ENCODE measurements at regions of chr1 and their contacts with region 1.

Region 1: DNA sequence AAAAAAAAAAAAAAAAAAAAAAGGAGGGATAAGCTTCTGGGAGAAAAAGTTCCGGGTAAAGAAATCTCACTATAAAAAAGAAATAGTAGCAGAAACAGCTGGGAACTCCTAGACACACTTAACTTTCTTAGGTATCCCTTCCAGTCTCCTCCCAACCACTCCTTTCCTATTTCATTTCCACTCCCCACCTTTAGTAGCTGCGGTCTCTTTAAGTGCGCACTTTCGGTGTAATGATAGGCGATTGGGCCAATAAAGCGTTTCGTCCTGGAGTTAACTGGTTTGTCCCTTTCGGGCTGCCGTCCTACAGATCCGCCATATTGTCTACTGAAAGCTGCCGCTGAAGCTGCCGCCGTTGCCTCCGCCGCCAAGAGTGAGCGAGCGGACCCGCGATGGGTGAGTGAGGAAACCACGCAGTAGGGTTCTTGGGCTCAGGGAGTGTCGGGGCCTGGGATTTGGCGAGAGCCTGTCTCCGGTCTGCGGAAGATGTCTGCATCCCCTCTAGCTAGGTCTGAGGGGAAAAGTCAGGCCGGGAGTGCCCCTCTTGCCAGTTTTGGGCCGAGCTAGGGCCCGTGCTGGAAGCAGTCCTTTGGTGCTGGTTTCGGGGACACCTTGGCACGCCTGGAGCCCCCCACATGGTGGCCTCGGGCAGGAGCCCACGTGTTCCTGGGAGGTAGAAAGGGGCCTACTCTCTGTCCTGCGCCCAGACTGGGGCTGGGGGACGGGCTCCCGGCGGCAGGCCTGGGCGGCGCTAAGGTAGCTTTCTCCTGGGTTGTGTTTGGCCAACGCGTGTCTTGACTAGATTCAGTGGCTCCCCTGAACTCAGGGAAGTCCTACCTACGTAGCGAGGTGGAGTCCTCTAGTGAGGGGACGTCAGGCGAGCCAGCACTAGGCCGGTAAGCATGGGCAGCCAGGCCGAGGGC is at the start of gene KPNA6:
- DNase-seq: peak; percentile 78
- ATAC-seq: peak; percentile 83
- H3K4me3 Mint-ChIP-seq: peak within 1 kb of the TSS; percentile 99
- H3K27ac Mint-ChIP-seq: peak within 1 kb of the TSS; percentile 98
- H3K4me1 Mint-ChIP-seq: peaks cover 48% of the 10 kb centered on the region
- H3K27me3 Mint-ChIP-seq: no peaks in the 10 kb centered on the region
- CTCF ChIP-seq: no peak
- total RNA-seq, gene KPNA6: 58.7 and 60.3 TPM in 2 replicates

Region 2: GRCh38 chr1:32013386-32014198 is 94.4 kb before region 1 on chr1 and contains the start of gene KHDRBS1:
- CTCF ChIA-PET with region 1: no interaction called
- POLR2A ChIA-PET with region 1: interaction called, 3 read pairs
- intact Hi-C with region 1: loop called (anchors 5 kb)
- DNase-seq: peak; percentile 97
- ATAC-seq: peak; percentile 85
- H3K4me3 Mint-ChIP-seq: peak within 1 kb of the TSS; percentile 98
- H3K27ac Mint-ChIP-seq: peak within 1 kb of the TSS; percentile 91
- H3K4me1 Mint-ChIP-seq: peaks cover 39% of the 10 kb centered on the region
- H3K27me3 Mint-ChIP-seq: no peaks in the 10 kb centered on the region
- CTCF ChIP-seq: no peak
- total RNA-seq, gene KHDRBS1: 146 and 152 TPM in 2 replicates

Region 3: GRCh38 chr1:32142446-32143301 is 34.7 kb after region 1 on chr1:
- CTCF ChIA-PET with region 1: interaction called, 5 read pairs
- POLR2A ChIA-PET with region 1: interaction called, 4 read pairs
- intact Hi-C with region 1: loop called (anchors 5 kb)
- DNase-seq: no peak
- ATAC-seq: no peak
- H3K4me3 Mint-ChIP-seq: no peak overlapping the region
- H3K27ac Mint-ChIP-seq: no peak overlapping the region
- H3K4me1 Mint-ChIP-seq: peaks cover 53% of the 10 kb centered on the region
- H3K27me3 Mint-ChIP-seq: no peaks in the 10 kb centered on the region
- CTCF ChIP-seq: no peak

Region 4: GRCh38 chr1:32200226-32201010 is 92.4 kb after region 1 on chr1 and contains the start of gene CCDC28B:
- CTCF ChIA-PET with region 1: no interaction called
- POLR2A ChIA-PET with region 1: interaction called, 16 read pairs
- intact Hi-C with region 1: loop called (anchors 2 kb)
- DNase-seq: peak; percentile 62
- ATAC-seq: peak; percentile 51
- H3K4me3 Mint-ChIP-seq: peak within 1 kb of the TSS; percentile 87
- H3K27ac Mint-ChIP-seq: peak within 1 kb of the TSS; percentile 87
- H3K4me1 Mint-ChIP-seq: peaks cover 49% of the 10 kb centered on the region
- H3K27me3 Mint-ChIP-seq: no peaks in the 10 kb centered on the region
- CTCF ChIP-seq: no peak
- total RNA-seq, gene CCDC28B: 50.4 and 56.9 TPM in 2 replicates

Region 5: GRCh38 chr1:32221980-32222755 is 114.2 kb after region 1 on chr1 and contains the starts of genes EIF3I and TMEM234:
- CTCF ChIA-PET with region 1: no interaction called
- POLR2A ChIA-PET with region 1: no interaction called
- intact Hi-C with region 1: no loop called
- DNase-seq: peak; percentile 80
- ATAC-seq: peak; percentile 85
- H3K4me3 Mint-ChIP-seq: peak within 1 kb of the TSS; percentile 96
- H3K27ac Mint-ChIP-seq: peak within 1 kb of the TSS; percentile 95
- H3K4me1 Mint-ChIP-seq: peaks cover 50% of the 10 kb centered on the region
- H3K27me3 Mint-ChIP-seq: no peaks in the 10 kb centered on the region
- CTCF ChIP-seq: no peak
- total RNA-seq, gene EIF3I: 196 and 213 TPM in 2 replicates
- total RNA-seq, gene TMEM234: 31.8 and 35.5 TPM in 2 replicates

Region 6: DNA sequence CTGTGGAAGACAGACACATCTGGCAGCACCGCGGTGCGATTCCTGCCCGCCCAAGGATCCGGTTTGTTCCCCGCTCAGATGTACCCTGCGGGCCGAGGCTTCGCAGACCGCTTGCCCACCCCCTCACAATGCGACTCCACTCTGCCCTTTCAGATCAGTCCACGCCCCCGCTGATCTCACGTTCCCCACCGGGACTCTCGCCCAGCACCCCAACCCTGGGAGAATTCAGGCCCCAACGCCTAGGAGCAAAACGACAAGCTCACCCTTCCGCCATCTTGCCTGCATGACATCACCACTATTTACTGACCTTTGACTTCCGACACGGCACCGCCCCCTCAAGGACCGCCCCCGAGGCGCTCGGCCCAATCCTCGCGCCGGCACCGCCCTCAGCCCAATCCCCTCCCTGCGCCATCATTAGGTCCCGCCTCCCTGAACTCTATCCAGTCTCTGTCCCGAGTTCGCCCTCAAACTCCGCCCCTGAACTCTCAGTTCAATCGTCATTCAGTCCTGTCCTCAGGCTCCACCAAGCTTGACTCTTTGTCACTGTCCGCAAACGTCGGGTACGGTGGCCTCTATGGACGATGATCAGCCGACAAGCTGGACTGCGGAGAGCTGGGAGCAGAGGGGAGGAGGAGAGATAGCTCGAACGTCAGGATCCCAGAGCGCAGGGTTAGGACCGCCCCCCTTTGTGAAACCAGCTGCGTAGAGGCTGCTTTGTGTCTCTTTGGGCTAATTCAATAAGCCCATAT is 286.3 kb after region 1 on chr1 and contains the start of gene BSDC1:
- CTCF ChIA-PET with region 1: interaction called, 4 read pairs
- POLR2A ChIA-PET with region 1: interaction called, 4 read pairs
- intact Hi-C with region 1: loop called (anchors 1 kb)
- DNase-seq: peak; percentile 97
- ATAC-seq: peak; percentile 99
- H3K4me3 Mint-ChIP-seq: peak within 1 kb of the TSS; percentile 100
- H3K27ac Mint-ChIP-seq: peak within 1 kb of the TSS; percentile 98
- H3K4me1 Mint-ChIP-seq: peaks cover 27% of the 10 kb centered on the region
- H3K27me3 Mint-ChIP-seq: no peaks in the 10 kb centered on the region
- CTCF ChIP-seq: no peak
- total RNA-seq, gene BSDC1: 51.8 and 72.2 TPM in 2 replicates

Region 7: GRCh38 chr1:32525053-32525452 is 417.1 kb after region 1 on chr1:
- CTCF ChIA-PET with region 1: no interaction called
- POLR2A ChIA-PET with region 1: no interaction called
- intact Hi-C with region 1: no loop called
- DNase-seq: no peak
- ATAC-seq: no peak
- H3K4me3 Mint-ChIP-seq: no peak overlapping the region
- H3K27ac Mint-ChIP-seq: no peak overlapping the region
- H3K4me1 Mint-ChIP-seq: peaks cover 5% of the 10 kb centered on the region
- H3K27me3 Mint-ChIP-seq: peaks cover 2% of the 10 kb centered on the region
- CTCF ChIP-seq: no peak